Sigmoid colon (tissue), 7 donors: ENCODE measurements at regions of chr2 and their contacts with region 1.

Region 1: GRCh38 chr2:171433763-171434670 is at the starts of genes DCAF17 and METTL8:
- DNase-seq: peak; percentile 97
- H3K4me3 ChIP-seq: peak within 1 kb of the TSS; percentile 60 to 88 (median 78)
- H3K27ac ChIP-seq: peak within 1 kb of the TSS; percentile 88 to 99 (median 97)
- H3K4me1 ChIP-seq: peaks cover 0 to 46% (median 33%) of the 10 kb centered on the region in 4 donors
- H3K27me3 ChIP-seq: no peaks in the 10 kb centered on the region
- CTCF ChIP-seq: peak in 1 of 4 experiments; percentile 11
- EP300 ChIP-seq: no peak
- POLR2A ChIP-seq: peak in 1 of 2 donors; percentile 59
- total RNA-seq, gene DCAF17: 19.1 to 27.5 (median 21.9) TPM
- total RNA-seq, gene METTL8: 30.1 to 42.7 (median 40.2) TPM

Region 2: DNA sequence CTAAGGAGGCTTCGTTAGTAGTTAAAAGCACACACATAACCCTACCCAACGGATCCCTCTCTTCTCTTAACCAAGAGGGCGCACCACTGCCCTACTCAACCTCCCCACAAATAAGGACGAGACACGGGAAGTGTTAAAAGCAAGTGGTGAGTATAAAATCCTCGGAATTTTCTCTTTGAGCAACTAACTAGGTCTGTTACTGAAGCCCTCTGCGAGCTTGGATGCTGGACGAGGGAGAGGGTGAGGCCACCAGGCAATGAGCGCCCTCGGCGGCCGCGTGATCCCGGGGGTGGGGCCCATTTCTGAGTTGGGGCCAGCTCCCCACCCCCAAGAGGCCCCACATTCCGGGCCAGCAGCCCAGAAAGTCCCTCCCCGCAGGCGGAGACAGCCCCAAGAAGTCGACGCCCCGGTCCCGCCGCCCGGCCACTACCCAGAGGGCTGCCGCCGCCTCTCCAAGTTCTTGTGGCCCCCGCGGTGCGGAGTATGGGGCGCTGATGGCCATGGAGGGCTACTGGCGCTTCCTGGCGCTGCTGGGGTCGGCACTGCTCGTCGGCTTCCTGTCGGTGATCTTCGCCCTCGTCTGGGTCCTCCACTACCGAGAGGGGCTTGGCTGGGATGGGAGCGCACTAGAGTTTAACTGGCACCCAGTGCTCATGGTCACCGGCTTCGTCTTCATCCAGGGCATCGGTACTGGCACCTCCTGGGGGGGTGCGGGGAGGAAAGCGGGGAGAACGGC is 88.2 kb after region 1 on chr2 and contains the start of gene CYBRD1:
- intact Hi-C with region 1: loop called (anchors 1 kb)
- DNase-seq: peak; percentile 96
- H3K4me3 ChIP-seq: peak within 1 kb of the TSS; percentile 83 to 99 (median 93)
- H3K27ac ChIP-seq: peak within 1 kb of the TSS; percentile 93 to 98 (median 95)
- H3K4me1 ChIP-seq: peaks cover 0 to 26% (median 21%) of the 10 kb centered on the region in 4 donors
- H3K27me3 ChIP-seq: no peaks in the 10 kb centered on the region
- CTCF ChIP-seq: no peak
- EP300 ChIP-seq: peak in 1 of 4 donors; percentile 56
- POLR2A ChIP-seq: peak; percentile 58 to 72
- total RNA-seq, gene CYBRD1: 119 to 250 (median 197) TPM

Region 3: DNA sequence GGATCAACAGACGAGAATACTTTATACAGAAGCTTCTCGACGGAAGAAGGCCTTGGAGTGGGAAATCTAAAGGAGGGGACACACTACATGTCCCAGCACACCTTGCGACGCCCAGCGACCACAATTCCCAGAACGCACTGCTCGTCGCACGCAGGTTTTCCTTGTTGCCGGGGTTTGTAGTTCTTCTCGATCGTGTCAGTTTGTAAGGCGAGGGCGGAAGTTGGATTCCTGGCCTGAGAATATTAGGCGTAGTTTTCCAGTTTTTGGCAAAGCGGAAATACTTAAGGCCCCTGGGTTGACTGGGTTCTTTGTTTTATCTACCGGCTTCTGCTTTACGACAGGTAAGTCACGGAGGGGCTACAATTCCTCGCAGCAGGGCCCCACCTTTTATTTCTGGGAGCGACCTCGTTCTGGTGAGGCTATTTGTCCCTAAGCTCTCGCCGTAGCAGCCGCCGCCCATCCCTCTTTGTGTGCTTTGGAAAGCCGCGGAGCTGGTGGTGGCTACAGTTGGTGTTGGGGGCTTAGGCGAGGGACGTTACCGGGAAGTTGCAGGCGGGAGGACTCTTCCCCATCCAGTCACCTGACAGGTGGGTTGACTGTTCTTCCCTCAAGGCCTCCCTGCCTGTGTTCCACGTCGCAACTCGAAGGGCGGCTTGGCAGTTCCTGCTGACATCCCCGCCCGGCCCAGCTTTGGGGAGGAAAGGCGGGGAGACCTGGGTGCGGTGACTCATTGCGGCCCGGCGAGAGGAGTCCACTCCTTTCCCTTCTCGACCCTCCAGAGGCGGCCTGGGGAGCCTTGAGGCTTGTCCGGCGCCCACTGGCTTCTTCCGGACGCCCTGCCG is 253.5 kb after region 1 on chr2 and contains the start of gene DYNC1I2:
- intact Hi-C with region 1: loop called (anchors 10 kb)
- DNase-seq: peak; percentile 96
- H3K4me3 ChIP-seq: peak within 1 kb of the TSS; percentile 55 to 91 (median 75)
- H3K27ac ChIP-seq: peak within 1 kb of the TSS; percentile 81 to 88 (median 85)
- H3K4me1 ChIP-seq: peaks cover 0 to 19% (median 16%) of the 10 kb centered on the region in 4 donors
- H3K27me3 ChIP-seq: no peaks in the 10 kb centered on the region
- CTCF ChIP-seq: peak in 1 of 4 experiments; percentile 16
- EP300 ChIP-seq: no peak
- POLR2A ChIP-seq: peak in 1 of 2 donors; percentile 31
- total RNA-seq, gene DYNC1I2: 103 to 133 (median 127) TPM